Activated CD4-positive, alpha-beta T cell treated with anti-CD3 and anti-CD28 coated beads, Interleukin-2, amount 10 ng/mL, durations not matched to agents 24 days and 14 days (primary cell): ENCODE measurements at regions of chr1 and their contacts with region 1.

Region 1: GRCh38 chr1:39596163-39596562 is 19.6 kb upstream of the PABPC4 start:
- DNase-seq: no peak
- H3K4me3 Mint-ChIP-seq: no peak overlapping the region
- H3K27ac Mint-ChIP-seq: no peak overlapping the region
- H3K4me1 Mint-ChIP-seq: peaks cover 5% of the 10 kb centered on the region
- H3K27me3 Mint-ChIP-seq: peaks cover 15% of the 10 kb centered on the region

Region 2: DNA sequence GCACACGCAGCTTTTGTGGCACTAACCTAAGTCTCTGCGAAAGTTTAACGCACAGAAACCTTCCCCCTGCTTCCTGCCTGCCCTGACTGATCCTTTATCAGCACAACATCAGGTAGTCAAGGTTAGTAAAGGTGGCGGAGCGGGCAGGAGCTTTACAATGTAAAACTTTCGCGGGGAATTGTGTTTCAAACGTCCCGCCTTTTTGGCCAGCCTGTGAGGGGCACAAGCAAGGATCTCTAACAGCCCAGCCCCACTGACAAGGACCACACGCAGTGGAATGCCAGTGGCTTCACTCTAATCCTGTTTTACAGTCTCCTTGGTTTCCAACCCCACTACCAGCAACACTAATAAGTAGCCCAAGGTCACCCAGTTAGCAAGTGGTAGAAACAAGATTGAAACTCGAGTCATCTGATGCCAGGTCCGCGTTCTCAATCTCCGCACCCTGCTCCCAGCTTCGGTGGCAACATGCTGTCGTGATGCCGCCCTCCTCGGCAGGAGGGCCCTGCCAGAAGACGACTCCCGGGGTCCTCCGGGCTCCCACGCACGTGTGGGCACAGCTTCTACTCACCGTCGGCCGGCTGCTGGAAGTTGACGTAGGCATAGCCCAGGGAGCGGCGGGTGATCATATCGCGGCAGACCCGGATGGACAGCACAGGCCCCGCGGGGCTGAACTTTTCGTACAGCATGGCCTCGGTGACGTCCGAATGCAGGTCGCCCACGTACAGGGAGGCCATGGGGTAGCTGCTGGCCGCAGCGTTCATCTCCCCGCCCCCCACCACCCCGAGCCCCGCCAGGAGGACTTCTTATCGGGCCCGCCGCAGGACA is 20.8 kb before region 1 on chr1:
- intact Hi-C with region 1: loop called (anchors 2 kb)
- DNase-seq: peak; percentile 84
- H3K4me3 Mint-ChIP-seq: peak overlapping the region; percentile 93
- H3K27ac Mint-ChIP-seq: peak overlapping the region; percentile 90
- H3K4me1 Mint-ChIP-seq: peaks cover 41% of the 10 kb centered on the region
- H3K27me3 Mint-ChIP-seq: no peaks in the 10 kb centered on the region

Region 3: GRCh38 chr1:39625462-39626273 is 29.5 kb after region 1 on chr1:
- intact Hi-C with region 1: no loop called
- DNase-seq: no peak
- H3K4me3 Mint-ChIP-seq: no peak overlapping the region
- H3K27ac Mint-ChIP-seq: no peak overlapping the region
- H3K4me1 Mint-ChIP-seq: peaks cover 2% of the 10 kb centered on the region
- H3K27me3 Mint-ChIP-seq: peaks cover 8% of the 10 kb centered on the region